GM13976 (cell line): ENCODE measurements at regions of chr14 and their contacts with region 1.

Region 1: DNA sequence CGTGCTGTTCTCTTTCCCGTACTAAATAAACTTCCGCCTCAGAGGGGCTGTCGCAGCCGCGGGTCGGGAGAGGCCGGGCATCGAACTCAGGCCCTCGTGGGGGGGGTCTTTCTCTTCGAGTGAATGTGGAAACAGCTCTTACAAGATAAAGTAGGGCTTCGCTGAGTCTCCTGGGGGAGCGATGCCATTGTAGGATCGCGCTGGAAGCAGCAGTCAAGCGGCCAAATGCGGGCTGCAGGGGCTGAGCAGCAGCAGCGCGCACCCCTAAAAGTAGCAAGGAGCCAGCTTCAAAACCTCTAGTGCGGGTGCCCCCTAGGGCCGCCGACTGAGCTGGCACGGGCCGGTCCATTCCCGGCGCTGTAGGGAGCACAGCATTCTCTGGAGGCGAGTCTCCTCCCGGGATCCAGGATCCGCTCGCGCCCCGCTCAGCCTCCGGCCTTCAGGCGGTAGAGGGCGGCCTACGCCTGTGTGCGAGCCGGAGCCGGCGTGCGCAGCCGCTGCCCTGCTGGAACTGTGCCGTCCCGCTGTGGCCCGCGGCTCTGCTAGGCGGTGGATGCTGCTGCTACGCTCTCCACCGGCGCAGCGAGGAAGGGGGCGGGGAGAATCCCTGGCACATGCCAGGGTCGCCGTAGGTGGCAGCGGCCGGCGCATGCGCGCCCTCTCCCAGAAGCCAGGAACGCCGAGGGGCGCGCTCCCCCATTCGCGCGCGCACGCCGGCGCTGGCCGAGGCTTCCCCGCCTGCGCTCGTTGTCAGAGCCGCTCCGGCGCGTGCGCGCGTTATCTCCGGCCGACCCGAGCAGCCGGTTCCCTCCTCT is at the start of gene FUT8:
- DNase-seq: peak; percentile 84
- CTCF ChIP-seq: peak; percentile 50

Region 2: GRCh38 chr14:65222440-65222858 is 189.8 kb before region 1 on chr14:
- in situ Hi-C with region 1: loop called (anchors 10 kb)
- DNase-seq: peak; percentile 67
- CTCF ChIP-seq: peak; percentile 64

Region 3: GRCh38 chr14:65631040-65631439 is 218.8 kb after region 1 on chr14:
- in situ Hi-C with region 1: no loop called
- DNase-seq: no peak
- CTCF ChIP-seq: no peak

Region 4: GRCh38 chr14:65958664-65959562 is 546.7 kb after region 1 on chr14:
- in situ Hi-C with region 1: loop called (anchors 10 kb)
- DNase-seq: peak; percentile 57
- CTCF ChIP-seq: peak; percentile 20

Region 5: GRCh38 chr14:66070509-66071319 is 658.5 kb after region 1 on chr14:
- in situ Hi-C with region 1: loop called (anchors 25 kb)
- DNase-seq: peak; percentile 63
- CTCF ChIP-seq: peak; percentile 67